ENCODE measurements at regions of chr14 and their contacts with region 1.

Region 1: GRCh38 chr14:24442273-24443052 is at the start of gene SDR39U1:
- DNase-seq: peak; percentile 98
- H3K4me3 Mint-ChIP-seq: peak within 1 kb of the TSS; percentile 95
- H3K27ac Mint-ChIP-seq: peak within 1 kb of the TSS; percentile 99
- H3K4me1 Mint-ChIP-seq: peaks cover 43% of the 10 kb centered on the region
- H3K27me3 Mint-ChIP-seq: no peaks in the 10 kb centered on the region
- total RNA-seq, gene SDR39U1: 36.2 to 43.8 TPM

Region 2: GRCh38 chr14:24232121-24232644 is 210.3 kb before region 1 on chr14 and contains the start of gene NEDD8:
- CTCF ChIA-PET with region 1: no interaction called
- POLR2A ChIA-PET with region 1: no interaction called
- intact Hi-C with region 1: loop called (anchors 2 kb)
- DNase-seq: peak; percentile 96
- H3K4me3 Mint-ChIP-seq: peak within 1 kb of the TSS; percentile 93
- H3K27ac Mint-ChIP-seq: peak within 1 kb of the TSS; percentile 90
- H3K4me1 Mint-ChIP-seq: peaks cover 55% of the 10 kb centered on the region
- H3K27me3 Mint-ChIP-seq: no peaks in the 10 kb centered on the region
- total RNA-seq, gene NEDD8: 202 to 213 TPM

Region 3: DNA sequence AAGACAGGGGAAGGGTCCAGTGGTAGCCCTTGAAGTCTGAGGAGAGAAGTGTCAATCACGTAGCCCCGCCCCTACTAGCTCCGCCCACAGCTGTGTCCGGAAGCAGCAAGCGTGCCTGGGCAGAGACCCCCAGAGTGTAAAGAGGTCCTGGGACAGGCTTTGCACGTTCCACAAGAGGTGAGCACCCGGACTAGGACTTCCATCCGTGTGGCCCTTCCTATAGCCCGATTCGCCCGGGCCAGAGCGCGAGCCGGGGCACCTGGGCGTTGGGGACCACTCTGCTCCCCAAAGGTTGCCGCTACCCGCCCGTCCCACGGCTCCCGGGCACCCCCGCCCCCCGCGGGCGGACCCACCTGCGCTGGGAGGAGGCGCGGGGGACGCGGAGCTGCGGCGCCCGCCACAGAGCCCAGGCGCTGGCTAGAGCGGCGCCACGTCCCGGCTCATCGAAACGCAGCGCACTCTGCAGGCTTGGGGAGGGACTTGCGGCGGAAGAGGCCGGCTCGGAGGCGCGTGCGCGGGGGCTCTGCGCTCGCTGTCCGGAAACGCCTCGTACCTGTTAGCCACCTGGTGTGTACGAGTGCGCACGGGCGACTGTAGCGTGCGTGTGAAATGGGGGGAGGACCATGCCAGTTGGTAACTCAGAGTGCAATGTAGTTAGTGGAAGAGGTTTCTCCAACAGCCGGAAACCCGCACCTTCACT is 171.2 kb before region 1 on chr14 and contains the start of gene RABGGTA:
- CTCF ChIA-PET with region 1: interaction called, 6 read pairs
- POLR2A ChIA-PET with region 1: no interaction called
- intact Hi-C with region 1: loop called (anchors 1 kb)
- DNase-seq: peak; percentile 93
- H3K4me3 Mint-ChIP-seq: peak within 1 kb of the TSS; percentile 84
- H3K27ac Mint-ChIP-seq: peak within 1 kb of the TSS; percentile 94
- H3K4me1 Mint-ChIP-seq: peaks cover 42% of the 10 kb centered on the region
- H3K27me3 Mint-ChIP-seq: no peaks in the 10 kb centered on the region
- total RNA-seq, gene RABGGTA: 39.5 to 40.6 TPM

Region 4: GRCh38 chr14:24366721-24367513 is 75.5 kb before region 1 on chr14:
- CTCF ChIA-PET with region 1: interaction called, 129 read pairs
- POLR2A ChIA-PET with region 1: no interaction called
- intact Hi-C with region 1: no loop called
- DNase-seq: peak; percentile 34
- H3K4me3 Mint-ChIP-seq: peak overlapping the region; percentile 55
- H3K27ac Mint-ChIP-seq: no peak overlapping the region
- H3K4me1 Mint-ChIP-seq: peaks cover 24% of the 10 kb centered on the region
- H3K27me3 Mint-ChIP-seq: peaks cover 39% of the 10 kb centered on the region

Region 5: GRCh38 chr14:24673534-24674203 is 231.2 kb after region 1 on chr14:
- CTCF ChIA-PET with region 1: no interaction called
- POLR2A ChIA-PET with region 1: interaction called, 3 read pairs
- intact Hi-C with region 1: loop called (anchors 1 kb)
- DNase-seq: peak; percentile 83
- H3K4me3 Mint-ChIP-seq: peak overlapping the region; percentile 62
- H3K27ac Mint-ChIP-seq: peak overlapping the region; percentile 94
- H3K4me1 Mint-ChIP-seq: peaks cover 79% of the 10 kb centered on the region
- H3K27me3 Mint-ChIP-seq: no peaks in the 10 kb centered on the region